ENCODE measurements at regions of chr3 and their contacts with region 1.

Region 1: DNA sequence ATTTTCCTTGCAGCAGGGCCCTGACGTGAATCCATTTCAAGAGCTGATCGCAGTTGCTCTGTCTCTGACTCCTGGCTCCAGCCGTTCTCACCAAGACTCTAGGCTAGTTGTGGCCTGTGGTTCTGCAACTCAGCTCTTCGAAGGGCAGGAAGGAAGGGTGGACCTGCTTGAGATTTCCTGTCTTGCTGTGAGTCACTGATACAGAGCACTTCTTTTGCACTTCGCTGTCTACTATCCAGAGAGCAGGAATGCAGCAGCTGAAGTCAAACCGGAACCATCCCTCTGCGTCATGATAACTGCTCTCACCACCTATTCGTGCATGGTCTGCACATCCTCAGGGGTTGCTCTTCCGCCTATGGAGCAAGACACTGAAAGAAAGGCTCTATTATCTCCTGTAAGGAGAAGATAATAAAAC is 59.7 kb downstream of the RAP2B start:
- DNase-seq: peak; percentile 72 to 93
- ATAC-seq: peak; percentile 90 to 98 (median 98)
- H3K4me3 ChIP-seq: peak overlapping the region; percentile 2
- H3K4me3 Mint-ChIP-seq: peak overlapping the region; percentile 86
- H3K27ac ChIP-seq: peak overlapping the region; percentile 99
- H3K27ac Mint-ChIP-seq: peak overlapping the region; percentile 94 to 99
- H3K4me1 ChIP-seq: peaks cover 45% of the 10 kb centered on the region
- H3K4me1 Mint-ChIP-seq: peaks cover 49 to 60% of the 10 kb centered on the region in 2 donors
- H3K27me3 ChIP-seq: no peaks in the 10 kb centered on the region
- H3K27me3 Mint-ChIP-seq: no peaks in the 10 kb centered on the region
- CTCF ChIP-seq: no peak

Region 2: GRCh38 chr3:153242896-153243295 is 21.1 kb after region 1 on chr3:
- intact Hi-C with region 1: loop called (anchors 1 kb)
- DNase-seq: peak in 1 of 2 donors; percentile 59
- ATAC-seq: peak; percentile 80 to 98 (median 90)
- H3K4me3 ChIP-seq: no peak overlapping the region
- H3K4me3 Mint-ChIP-seq: peak overlapping the region; percentile 75
- H3K27ac ChIP-seq: peak overlapping the region; percentile 70
- H3K27ac Mint-ChIP-seq: peak overlapping the region; percentile 89 to 91
- H3K4me1 ChIP-seq: peaks cover 12% of the 10 kb centered on the region
- H3K4me1 Mint-ChIP-seq: peaks cover 47 to 53% of the 10 kb centered on the region in 2 donors
- H3K27me3 ChIP-seq: no peaks in the 10 kb centered on the region
- H3K27me3 Mint-ChIP-seq: no peaks in the 10 kb centered on the region
- CTCF ChIP-seq: no peak

Region 3: GRCh38 chr3:153291056-153291685 is 69.4 kb after region 1 on chr3:
- intact Hi-C with region 1: loop called (anchors 5 kb)
- DNase-seq: peak in 1 of 2 donors; percentile 56
- ATAC-seq: peak; percentile 55 to 73 (median 63)
- H3K4me3 ChIP-seq: no peak overlapping the region
- H3K4me3 Mint-ChIP-seq: peak overlapping the region; percentile 25
- H3K27ac ChIP-seq: no peak overlapping the region
- H3K27ac Mint-ChIP-seq: peak overlapping the region; percentile 31 to 50
- H3K4me1 ChIP-seq: peaks cover 2% of the 10 kb centered on the region
- H3K4me1 Mint-ChIP-seq: peaks cover 45 to 47% of the 10 kb centered on the region in 2 donors
- H3K27me3 ChIP-seq: no peaks in the 10 kb centered on the region
- H3K27me3 Mint-ChIP-seq: no peaks in the 10 kb centered on the region
- CTCF ChIP-seq: no peak

Region 4: DNA sequence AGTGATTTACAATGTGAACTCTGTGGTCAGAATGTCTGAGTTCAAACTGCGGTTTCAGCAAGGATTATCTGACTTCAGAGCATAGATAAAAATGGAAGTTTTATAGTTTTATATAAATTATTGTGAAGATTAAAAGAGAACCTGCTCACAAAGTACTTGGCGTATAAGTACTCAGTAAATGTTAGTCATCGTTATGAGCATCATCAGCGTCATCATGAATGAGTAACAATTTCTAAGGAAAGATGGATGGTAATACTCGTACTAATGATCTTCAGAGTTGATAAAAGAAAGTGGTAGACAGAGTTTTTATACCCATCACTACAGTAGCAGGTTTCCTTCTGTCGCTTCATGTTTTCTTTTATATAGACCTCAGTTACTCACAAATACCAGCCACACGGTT is 282.1 kb after region 1 on chr3:
- intact Hi-C with region 1: no loop called
- DNase-seq: no peak
- ATAC-seq: no peak
- H3K4me3 ChIP-seq: no peak overlapping the region
- H3K4me3 Mint-ChIP-seq: no peak overlapping the region
- H3K27ac ChIP-seq: no peak overlapping the region
- H3K27ac Mint-ChIP-seq: no peak overlapping the region
- H3K4me1 ChIP-seq: no peaks in the 10 kb centered on the region
- H3K4me1 Mint-ChIP-seq: peaks cover 0 to 6% of the 10 kb centered on the region in 2 donors
- H3K27me3 ChIP-seq: no peaks in the 10 kb centered on the region
- H3K27me3 Mint-ChIP-seq: no peaks in the 10 kb centered on the region
- CTCF ChIP-seq: no peak